ENCODE measurements at regions of chr4 and their contacts with region 1.

Region 1: DNA sequence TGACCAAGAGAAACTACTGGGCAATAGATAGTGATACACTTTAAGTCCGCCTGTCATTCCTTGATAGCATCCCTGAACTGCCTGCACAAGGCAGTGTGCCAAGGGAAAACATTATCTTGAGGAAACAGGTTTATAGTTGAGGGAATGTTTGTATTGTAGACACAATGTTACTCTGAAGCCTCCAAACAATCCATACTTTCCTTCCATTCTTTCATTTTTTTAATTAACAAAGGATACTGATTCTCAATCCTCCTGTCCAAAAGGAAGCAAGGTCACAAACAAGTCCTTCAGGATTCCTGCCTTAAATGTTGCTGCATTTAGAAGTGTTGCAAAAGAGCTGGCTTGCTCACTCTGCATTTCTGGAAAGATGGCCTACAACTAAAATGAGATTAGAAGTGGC is 61.7 kb upstream of the PRSS48 start:
- DNase-seq: no peak
- H3K4me3 ChIP-seq: no peak overlapping the region
- H3K27ac ChIP-seq: no peak overlapping the region
- H3K27me3 ChIP-seq: no peaks in the 10 kb centered on the region
- CTCF ChIP-seq: no peak

Region 2: DNA sequence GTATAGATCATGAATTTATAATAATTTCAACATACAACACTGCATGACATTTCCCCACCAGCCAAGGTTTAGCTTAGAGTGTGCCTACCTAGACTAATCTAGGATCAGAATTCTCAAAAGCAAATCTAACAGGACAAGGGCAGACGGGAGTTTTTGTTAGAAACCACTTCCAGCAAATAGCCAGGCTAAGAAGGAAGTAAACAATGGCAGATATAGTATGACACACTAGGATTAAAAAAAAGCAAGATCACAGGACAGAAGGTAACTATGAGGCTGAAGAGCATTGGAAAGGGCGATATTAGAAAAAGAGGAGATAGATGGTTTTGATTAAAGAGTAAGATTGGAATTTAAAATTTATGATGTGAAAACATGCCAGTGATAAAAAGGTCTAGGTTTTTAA is 325.0 kb before region 1 on chr4:
- CTCF ChIA-PET with region 1: no interaction called
- POLR2A ChIA-PET with region 1: no interaction called
- DNase-seq: no peak
- H3K4me3 ChIP-seq: no peak overlapping the region
- H3K27ac ChIP-seq: no peak overlapping the region
- H3K27me3 ChIP-seq: no peaks in the 10 kb centered on the region
- CTCF ChIP-seq: no peak

Region 3: DNA sequence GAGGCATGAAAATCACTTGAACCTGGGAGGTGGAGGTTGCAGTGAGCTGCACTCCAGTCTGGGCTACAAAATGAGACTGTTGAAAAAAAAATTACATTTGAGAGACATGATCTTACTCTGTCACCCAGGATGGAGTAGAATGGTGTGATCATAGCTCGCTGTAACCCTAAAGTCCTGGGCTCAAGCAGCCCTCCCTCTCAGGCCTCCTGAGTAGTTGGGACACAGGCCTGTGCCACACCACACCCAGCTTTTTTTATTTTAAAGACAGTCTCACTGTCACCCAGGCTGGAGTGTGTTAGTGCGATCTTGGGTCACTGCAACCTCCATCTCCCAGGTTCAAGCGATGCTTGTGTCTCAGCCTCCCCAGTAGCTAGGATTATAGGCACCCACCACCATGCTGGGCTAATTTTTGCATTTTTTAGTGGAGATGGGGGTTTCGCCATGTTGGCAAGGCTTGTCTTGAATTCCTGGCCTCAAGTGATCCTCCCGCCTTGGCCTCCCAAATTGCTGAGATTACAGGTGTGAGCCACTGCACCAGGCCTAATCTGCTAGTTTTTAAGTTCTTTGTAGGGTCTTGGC is 109.8 kb before region 1 on chr4:
- CTCF ChIA-PET with region 1: no interaction called
- POLR2A ChIA-PET with region 1: no interaction called
- DNase-seq: no peak
- H3K4me3 ChIP-seq: no peak overlapping the region
- H3K27ac ChIP-seq: no peak overlapping the region
- H3K27me3 ChIP-seq: no peaks in the 10 kb centered on the region
- CTCF ChIP-seq: no peak

Region 4: GRCh38 chr4:151284534-151285245 is 69.4 kb after region 1 on chr4:
- CTCF ChIA-PET with region 1: no interaction called
- POLR2A ChIA-PET with region 1: interaction called, 10 read pairs
- DNase-seq: no peak
- H3K4me3 ChIP-seq: no peak overlapping the region
- H3K27ac ChIP-seq: no peak overlapping the region
- H3K27me3 ChIP-seq: no peaks in the 10 kb centered on the region
- CTCF ChIP-seq: no peak

Measured in AG04450 (cell line).